AG04449 (cell line): ENCODE measurements at regions of chr19 and their contacts with region 1.

Region 1: DNA sequence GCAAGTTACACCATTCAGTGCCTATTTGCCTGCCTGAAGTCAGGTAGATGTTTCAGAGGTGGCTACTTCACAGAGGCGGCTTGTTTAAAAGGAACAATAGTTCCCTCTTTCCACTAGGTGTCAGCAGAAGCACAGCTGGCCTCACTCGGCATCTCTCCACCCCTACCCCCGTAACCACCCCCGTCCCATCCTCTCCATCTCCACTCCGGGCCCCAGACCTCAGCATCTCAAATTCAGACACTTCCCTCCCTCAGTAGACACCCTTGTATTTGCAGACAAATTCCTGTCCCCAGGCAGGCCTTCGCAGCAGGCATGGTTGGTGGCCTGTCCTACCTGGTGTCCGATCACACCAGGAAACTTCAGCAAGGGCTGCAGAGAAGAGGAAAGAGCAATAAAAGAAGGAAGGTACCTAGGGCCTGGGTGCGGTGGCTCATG is 9.1 kb upstream of the DPP9 start:
- DNase-seq: no peak
- H3K4me3 ChIP-seq: no peak overlapping the region; the same call in 1 of the 2 replicates
- CTCF ChIP-seq: peak; percentile 71

Region 2: GRCh38 chr19:4744451-4745174 is 11.9 kb after region 1 on chr19:
- CTCF ChIA-PET with region 1: interaction called, 41 read pairs
- POLR2A ChIA-PET with region 1: no interaction called
- DNase-seq: peak; percentile 75
- H3K4me3 ChIP-seq: no peak overlapping the region
- CTCF ChIP-seq: no peak

Region 3: DNA sequence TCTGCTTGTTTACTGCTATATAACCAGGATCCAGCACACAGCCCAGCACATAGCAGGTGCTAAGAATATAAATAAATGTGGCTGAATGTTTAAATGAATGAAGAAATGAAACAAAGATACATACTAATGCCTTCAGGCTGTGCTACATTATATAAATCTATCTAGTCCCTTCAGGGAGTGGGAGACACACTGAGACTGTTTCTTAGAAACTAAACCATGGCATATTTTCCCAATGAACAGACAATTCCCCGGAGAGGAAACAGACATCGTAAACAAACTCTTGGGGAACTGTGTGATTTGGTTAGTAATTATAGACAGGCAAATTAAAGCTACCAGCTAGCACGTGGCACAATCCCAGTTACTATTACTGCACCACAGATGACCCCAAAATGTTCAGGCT is 49.1 kb after region 1 on chr19:
- CTCF ChIA-PET with region 1: interaction called, 315 read pairs
- POLR2A ChIA-PET with region 1: no interaction called
- DNase-seq: no peak
- H3K4me3 ChIP-seq: no peak overlapping the region
- CTCF ChIP-seq: no peak

Region 4: DNA sequence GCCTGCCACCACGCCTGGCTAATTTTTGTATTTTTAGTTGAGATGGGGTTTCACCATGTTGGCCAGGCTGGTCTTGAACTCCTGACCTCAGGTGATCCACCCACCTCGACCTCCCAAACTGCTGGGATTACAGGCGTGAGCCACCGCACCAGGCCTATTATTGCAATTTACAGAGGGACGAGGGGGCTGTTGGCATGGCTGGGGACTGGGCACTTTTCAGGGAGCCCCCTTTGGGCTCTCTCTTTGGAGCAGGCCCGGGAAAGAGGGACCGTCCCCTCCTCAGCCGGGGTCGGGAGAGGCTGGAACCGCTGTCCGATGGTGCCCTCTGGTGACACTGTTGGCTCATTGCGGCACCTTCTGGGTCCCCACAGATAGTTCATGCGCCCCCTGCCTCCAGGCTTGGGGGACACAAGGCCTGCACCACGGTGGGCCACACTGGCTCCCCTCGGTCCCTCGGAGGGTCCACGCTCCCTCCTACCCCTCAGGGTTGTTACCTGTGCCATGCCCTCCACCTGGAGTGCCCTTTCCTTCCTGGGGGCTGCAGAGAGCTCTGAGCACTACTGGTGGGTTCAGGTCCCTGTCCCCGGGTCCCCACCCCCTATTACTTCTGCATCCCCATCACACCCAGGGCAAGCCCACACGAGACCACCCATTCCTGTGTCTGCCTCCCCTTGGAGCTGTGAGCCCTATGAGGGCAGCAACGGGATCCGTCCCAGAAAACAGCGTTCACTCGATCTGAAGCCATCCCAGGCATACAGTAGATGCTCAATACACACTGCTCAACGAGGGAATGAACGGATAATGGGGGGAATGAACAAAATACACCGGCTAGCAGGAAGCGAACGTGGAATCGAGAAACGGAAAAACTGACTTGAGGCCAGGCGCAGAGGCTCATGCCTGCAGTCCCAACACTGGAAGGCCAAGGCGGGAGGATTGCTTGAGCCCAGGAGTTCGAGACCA is 71.3 kb after region 1 on chr19:
- CTCF ChIA-PET with region 1: interaction called, 76 read pairs
- POLR2A ChIA-PET with region 1: no interaction called
- DNase-seq: no peak
- H3K4me3 ChIP-seq: no peak overlapping the region
- CTCF ChIP-seq: peak; percentile 87